ENCODE measurements at regions of chr5 and their contacts with region 1.

Region 1: GRCh38 chr5:177403792-177404640 is 3.6 kb upstream of the PFN3 start:
- DNase-seq: peak; percentile 91
- ATAC-seq: peak; percentile 82
- H3K4me3 ChIP-seq: peak overlapping the region; percentile 14 to 68 (median 61)
- H3K4me3 Mint-ChIP-seq: peak overlapping the region; percentile 84
- H3K27ac ChIP-seq: peak overlapping the region in 1 of 2 donors; percentile 48
- H3K27ac Mint-ChIP-seq: peak overlapping the region; percentile 32
- H3K4me1 ChIP-seq: peaks cover 38 to 50% of the 10 kb centered on the region in 2 donors
- H3K4me1 Mint-ChIP-seq: peaks cover 39% of the 10 kb centered on the region
- H3K27me3 ChIP-seq: peaks cover 0 to 37% (median 9%) of the 10 kb centered on the region in 4 experiments
- H3K27me3 Mint-ChIP-seq: peaks cover 14% of the 10 kb centered on the region
- CTCF ChIP-seq: peak; percentile 70

Region 2: DNA sequence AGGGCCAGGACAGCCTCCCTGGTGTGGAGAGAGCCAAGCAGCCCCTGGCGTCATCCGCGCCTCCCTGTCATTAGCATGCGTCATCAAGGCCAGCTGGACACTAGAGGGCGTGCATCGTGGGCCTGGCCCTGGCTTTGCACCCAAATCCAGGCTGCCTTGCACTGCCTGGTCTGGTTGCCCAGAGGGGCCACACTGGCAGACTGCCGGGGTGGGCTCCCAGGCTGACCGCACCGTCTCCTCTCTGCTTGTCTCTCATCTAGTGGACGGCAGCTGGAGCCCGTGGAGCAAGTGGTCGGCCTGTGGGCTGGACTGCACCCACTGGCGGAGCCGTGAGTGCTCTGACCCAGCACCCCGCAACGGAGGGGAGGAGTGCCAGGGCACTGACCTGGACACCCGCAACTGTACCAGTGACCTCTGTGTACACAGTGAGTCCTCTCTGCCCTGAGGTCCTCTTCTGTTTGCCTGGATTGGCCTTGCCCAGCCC is 533.9 kb before region 1 on chr5:
- CTCF ChIA-PET with region 1: no interaction called
- POLR2A ChIA-PET with region 1: no interaction called
- intact Hi-C with region 1: no loop called
- DNase-seq: no peak
- ATAC-seq: no peak
- H3K4me3 ChIP-seq: no peak overlapping the region
- H3K4me3 Mint-ChIP-seq: no peak overlapping the region
- H3K27ac ChIP-seq: no peak overlapping the region
- H3K27ac Mint-ChIP-seq: no peak overlapping the region
- H3K4me1 ChIP-seq: no peaks in the 10 kb centered on the region
- H3K4me1 Mint-ChIP-seq: peaks cover 2% of the 10 kb centered on the region
- H3K27me3 ChIP-seq: peaks cover 0 to 20% (median 9%) of the 10 kb centered on the region in 4 experiments
- H3K27me3 Mint-ChIP-seq: peaks cover 16% of the 10 kb centered on the region
- CTCF ChIP-seq: no peak

Region 3: GRCh38 chr5:177419051-177419450 is 15.0 kb after region 1 on chr5:
- CTCF ChIA-PET with region 1: interaction called, 137 read pairs
- POLR2A ChIA-PET with region 1: interaction called, 6 read pairs
- intact Hi-C with region 1: no loop called
- DNase-seq: no peak
- ATAC-seq: no peak
- H3K4me3 ChIP-seq: no peak overlapping the region
- H3K4me3 Mint-ChIP-seq: no peak overlapping the region
- H3K27ac ChIP-seq: no peak overlapping the region
- H3K27ac Mint-ChIP-seq: no peak overlapping the region
- H3K4me1 ChIP-seq: no peaks in the 10 kb centered on the region
- H3K4me1 Mint-ChIP-seq: no peaks in the 10 kb centered on the region
- H3K27me3 ChIP-seq: no peaks in the 10 kb centered on the region
- H3K27me3 Mint-ChIP-seq: no peaks in the 10 kb centered on the region
- CTCF ChIP-seq: no peak

Region 4: GRCh38 chr5:177431317-177432142 is 27.5 kb after region 1 on chr5:
- CTCF ChIA-PET with region 1: interaction called, 137 read pairs
- POLR2A ChIA-PET with region 1: interaction called, 35 read pairs
- intact Hi-C with region 1: loop called (anchors 1 kb)
- DNase-seq: peak; percentile 95
- ATAC-seq: peak; percentile 61
- H3K4me3 ChIP-seq: peak overlapping the region in 4 of 5 experiments; percentile 29 to 35 (median 32)
- H3K4me3 Mint-ChIP-seq: peak overlapping the region; percentile 94
- H3K27ac ChIP-seq: peak overlapping the region; percentile 92 to 96
- H3K27ac Mint-ChIP-seq: peak overlapping the region; percentile 97
- H3K4me1 ChIP-seq: peaks cover 63 to 83% of the 10 kb centered on the region in 2 donors
- H3K4me1 Mint-ChIP-seq: peaks cover 65% of the 10 kb centered on the region
- H3K27me3 ChIP-seq: no peaks in the 10 kb centered on the region
- H3K27me3 Mint-ChIP-seq: no peaks in the 10 kb centered on the region
- CTCF ChIP-seq: no peak

Region 5: DNA sequence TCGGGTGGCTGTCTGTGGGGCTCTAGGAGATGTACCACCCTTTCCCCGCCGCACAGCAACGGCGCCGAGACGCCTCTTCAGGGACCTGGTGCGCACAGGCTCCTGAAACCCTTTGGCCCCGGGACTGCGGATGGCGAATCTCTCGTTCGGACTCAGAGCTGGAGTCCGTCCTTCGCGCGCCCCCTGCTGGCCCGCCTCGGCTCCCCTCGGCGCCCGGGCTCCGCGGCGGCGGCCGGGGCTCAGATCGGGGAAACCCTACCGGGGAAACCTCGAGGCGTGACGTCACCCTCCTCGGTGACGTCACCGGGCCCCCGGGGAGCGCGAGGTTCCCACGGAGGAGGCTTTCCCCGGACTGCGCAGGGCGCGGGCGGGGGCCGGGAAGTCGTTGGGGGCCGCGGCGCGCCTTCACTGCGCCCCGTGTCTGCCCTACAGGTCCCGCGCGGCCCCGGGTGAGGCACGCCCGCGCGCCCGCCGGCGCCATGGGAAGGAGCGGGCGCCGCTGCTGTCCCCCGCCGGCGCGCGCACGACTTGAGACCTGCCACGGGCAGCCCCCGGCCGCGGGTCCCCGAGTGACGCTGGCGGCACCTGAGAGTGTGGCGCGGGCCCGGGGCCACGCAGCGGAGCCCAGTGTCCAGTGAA is 50.5 kb after region 1 on chr5:
- CTCF ChIA-PET with region 1: interaction called, 628 read pairs
- POLR2A ChIA-PET with region 1: interaction called, 87 read pairs
- intact Hi-C with region 1: loop called (anchors 1 kb)
- DNase-seq: peak; percentile 98
- ATAC-seq: peak; percentile 53
- H3K4me3 ChIP-seq: peak overlapping the region; percentile 13 to 91 (median 74)
- H3K4me3 Mint-ChIP-seq: peak overlapping the region; percentile 96
- H3K27ac ChIP-seq: peak overlapping the region; percentile 88 to 97
- H3K27ac Mint-ChIP-seq: peak overlapping the region; percentile 97
- H3K4me1 ChIP-seq: peaks cover 17 to 32% of the 10 kb centered on the region in 2 donors
- H3K4me1 Mint-ChIP-seq: peaks cover 27% of the 10 kb centered on the region
- H3K27me3 ChIP-seq: peaks cover 0 to 7% (median 0%) of the 10 kb centered on the region in 4 experiments
- H3K27me3 Mint-ChIP-seq: no peaks in the 10 kb centered on the region
- CTCF ChIP-seq: peak; percentile 81

Region 6: DNA sequence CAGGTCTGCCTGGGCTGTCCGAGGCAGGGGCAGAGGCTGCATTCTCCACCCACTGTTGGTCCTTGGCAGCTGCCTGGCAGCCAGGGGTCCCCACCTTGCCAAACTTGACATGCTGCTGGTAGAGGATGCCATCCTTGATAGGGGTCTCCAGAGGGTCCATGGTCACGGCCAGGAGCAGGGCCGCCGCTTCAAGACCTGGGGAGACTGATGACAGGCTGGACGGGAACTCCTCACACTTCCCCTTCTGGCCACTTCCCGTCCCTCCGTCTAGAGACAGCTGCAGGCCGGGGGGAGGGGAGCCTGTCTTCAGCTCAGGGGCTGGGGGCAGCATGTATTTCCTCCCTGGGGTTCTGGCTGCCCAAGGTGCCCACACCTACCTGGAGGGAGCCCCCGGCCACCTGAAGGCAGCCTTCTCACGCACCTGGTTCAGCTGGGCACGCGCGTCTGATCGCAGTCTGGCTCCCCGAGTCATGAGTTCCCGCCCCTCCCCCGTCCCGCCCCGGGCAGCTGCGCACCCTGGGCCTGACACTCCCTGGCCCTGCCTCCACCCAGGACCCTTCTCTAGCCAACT is 105.5 kb after region 1 on chr5 and contains the start of gene DOK3:
- CTCF ChIA-PET with region 1: interaction called, 19 read pairs
- POLR2A ChIA-PET with region 1: interaction called, 4 read pairs
- intact Hi-C with region 1: no loop called
- DNase-seq: peak; percentile 81
- ATAC-seq: peak; percentile 39
- H3K4me3 ChIP-seq: peak within 1 kb of the TSS; percentile 57 to 95 (median 75)
- H3K4me3 Mint-ChIP-seq: peak within 1 kb of the TSS; percentile 94
- H3K27ac ChIP-seq: peak within 1 kb of the TSS; percentile 91 to 96
- H3K27ac Mint-ChIP-seq: peak within 1 kb of the TSS; percentile 98
- H3K4me1 ChIP-seq: peaks cover 38 to 53% of the 10 kb centered on the region in 2 donors
- H3K4me1 Mint-ChIP-seq: peaks cover 55% of the 10 kb centered on the region
- H3K27me3 ChIP-seq: no peaks in the 10 kb centered on the region
- H3K27me3 Mint-ChIP-seq: no peaks in the 10 kb centered on the region
- CTCF ChIP-seq: no peak
- total RNA-seq, gene DOK3: 113 and 115 TPM in 2 replicates

Measured in B cell (primary cell).